BJ (cell line): ENCODE measurements at regions of chr17 and their contacts with region 1.

Region 1: DNA sequence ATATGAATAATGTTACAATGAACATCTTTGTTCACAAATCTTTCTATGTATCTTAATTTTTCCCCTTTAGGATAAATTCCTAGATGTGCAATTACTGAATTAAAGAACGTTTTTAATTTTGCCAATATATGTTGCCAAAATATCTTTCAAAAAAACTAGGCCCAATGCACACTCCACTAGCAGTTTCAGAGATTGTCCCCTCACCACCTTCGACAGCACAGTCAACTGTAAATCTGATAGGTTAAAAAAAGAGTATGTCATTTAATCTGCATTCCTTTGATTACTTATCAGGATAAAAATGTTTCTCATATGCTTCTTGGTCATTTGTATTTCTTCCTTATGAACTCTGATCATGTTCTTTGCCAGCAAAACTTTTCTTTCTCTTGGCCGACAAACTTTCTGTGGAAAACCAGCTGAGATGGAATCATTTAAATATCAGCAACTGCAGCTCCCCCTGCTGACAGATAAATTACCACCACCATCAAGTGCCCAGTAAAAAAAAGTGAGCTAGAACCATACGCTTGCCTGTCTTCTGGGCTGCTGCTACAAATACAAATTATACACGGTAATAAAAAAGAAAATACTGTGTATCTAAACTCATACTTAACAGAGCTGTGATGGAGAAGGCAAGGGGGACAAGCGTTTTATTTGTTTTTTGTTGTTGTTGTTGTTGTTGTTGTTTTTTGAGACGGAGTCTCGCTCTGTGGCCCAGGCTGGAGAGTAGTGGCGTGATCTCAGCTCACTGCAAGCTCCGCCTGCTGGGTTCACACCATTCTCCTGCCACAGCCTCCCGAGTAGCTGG is 19.6 kb upstream of the KANSL1 start:
- DNase-seq: no peak
- H3K4me3 ChIP-seq: no peak overlapping the region
- H3K27me3 ChIP-seq: no peaks in the 10 kb centered on the region
- CTCF ChIP-seq: peak; percentile 91

Region 2: DNA sequence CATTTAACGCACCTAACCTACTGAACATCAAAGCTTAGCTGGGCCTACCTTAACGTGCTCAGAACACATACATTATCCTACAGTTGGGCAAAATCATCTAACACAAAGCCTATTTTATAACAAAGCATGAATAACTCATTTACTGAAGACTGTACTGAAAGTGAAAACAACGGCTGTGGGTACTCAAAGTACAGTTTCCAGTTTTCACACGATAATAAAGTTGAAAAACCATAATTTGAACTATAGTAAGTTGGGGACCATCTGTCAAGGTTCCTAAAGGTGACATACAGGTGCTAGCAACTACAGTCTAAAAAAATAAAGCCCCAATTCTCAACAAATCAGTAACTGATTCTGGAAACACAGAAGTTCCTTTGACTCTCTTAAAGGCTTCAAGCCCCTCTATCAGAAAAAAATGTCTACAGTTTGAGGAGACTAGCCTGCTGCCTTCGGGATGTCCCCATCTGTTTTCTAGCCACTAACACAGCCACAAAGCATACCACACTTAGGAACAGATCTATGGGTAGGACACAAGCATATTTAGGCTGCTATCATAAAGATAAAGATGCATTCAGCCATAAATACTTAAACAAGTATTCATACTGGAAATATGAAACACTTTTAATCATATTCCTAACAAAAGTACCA is 90.9 kb before region 1 on chr17:
- CTCF ChIA-PET with region 1: no interaction called
- POLR2A ChIA-PET with region 1: no interaction called
- DNase-seq: no peak
- H3K4me3 ChIP-seq: no peak overlapping the region
- H3K27me3 ChIP-seq: no peaks in the 10 kb centered on the region
- CTCF ChIP-seq: no peak

Region 3: DNA sequence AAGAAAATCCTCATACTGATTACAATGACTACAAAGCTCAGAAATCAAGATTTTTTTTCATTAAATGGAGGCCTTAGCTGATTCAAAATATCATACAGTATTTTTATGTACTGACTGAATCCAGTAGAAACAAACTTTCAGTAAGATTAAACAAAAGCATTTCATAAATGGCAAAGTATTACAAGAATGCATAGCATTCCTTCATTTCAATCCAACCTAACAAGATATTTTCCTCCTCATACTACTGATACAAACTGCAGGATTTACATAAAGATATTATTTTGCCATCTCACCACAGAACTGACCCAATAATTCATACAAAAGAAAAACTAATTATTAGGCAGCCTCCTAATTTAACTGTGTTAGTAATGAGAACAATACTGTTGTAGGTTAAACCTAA is 13.5 kb before region 1 on chr17:
- CTCF ChIA-PET with region 1: interaction called, 56 read pairs
- POLR2A ChIA-PET with region 1: interaction called, 5 read pairs
- DNase-seq: no peak
- H3K4me3 ChIP-seq: no peak overlapping the region
- H3K27me3 ChIP-seq: no peaks in the 10 kb centered on the region
- CTCF ChIP-seq: no peak